GM12878 (cell line): ENCODE measurements at regions of chr21 and their contacts with region 1.

Region 1: DNA sequence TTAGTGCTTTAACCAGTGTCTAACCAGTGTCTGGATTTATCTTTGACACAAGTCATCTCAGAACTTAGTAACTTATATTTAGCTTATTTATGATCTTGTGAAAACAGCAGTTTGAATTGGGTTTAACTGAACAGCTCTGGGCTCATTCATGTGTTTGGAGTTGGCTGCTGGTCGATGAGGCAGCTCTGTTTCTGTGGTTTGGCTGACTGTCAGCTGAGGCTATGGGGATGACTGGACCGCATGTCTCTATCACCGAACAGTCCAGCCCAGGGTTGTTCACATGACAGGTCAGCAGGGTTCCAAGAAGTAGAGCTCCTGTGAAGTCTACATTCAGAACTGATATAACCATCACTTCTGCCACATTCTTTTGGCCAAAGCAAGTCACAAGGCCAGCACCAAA is 29.1 kb upstream of the C21orf91 start:
- DNase-seq: peak; percentile 84
- ATAC-seq: peak; percentile 98
- H3K4me3 ChIP-seq: no peak overlapping the region
- H3K27ac ChIP-seq: peak overlapping the region; percentile 29; the same call in 1 of the 2 replicates
- H3K4me1 ChIP-seq: peaks cover 17% of the 10 kb centered on the region; the same call in 1 of the 2 replicates
- H3K27me3 ChIP-seq: no peaks in the 10 kb centered on the region
- CTCF ChIP-seq: no peak
- EP300 ChIP-seq: peak; percentile 74 to 95; a peak in 2 of 4 replicates
- POLR2A ChIP-seq: no peak
- RAD21 ChIP-seq: peak; percentile 13; the same call in 1 of the 2 replicates

Region 2: DNA sequence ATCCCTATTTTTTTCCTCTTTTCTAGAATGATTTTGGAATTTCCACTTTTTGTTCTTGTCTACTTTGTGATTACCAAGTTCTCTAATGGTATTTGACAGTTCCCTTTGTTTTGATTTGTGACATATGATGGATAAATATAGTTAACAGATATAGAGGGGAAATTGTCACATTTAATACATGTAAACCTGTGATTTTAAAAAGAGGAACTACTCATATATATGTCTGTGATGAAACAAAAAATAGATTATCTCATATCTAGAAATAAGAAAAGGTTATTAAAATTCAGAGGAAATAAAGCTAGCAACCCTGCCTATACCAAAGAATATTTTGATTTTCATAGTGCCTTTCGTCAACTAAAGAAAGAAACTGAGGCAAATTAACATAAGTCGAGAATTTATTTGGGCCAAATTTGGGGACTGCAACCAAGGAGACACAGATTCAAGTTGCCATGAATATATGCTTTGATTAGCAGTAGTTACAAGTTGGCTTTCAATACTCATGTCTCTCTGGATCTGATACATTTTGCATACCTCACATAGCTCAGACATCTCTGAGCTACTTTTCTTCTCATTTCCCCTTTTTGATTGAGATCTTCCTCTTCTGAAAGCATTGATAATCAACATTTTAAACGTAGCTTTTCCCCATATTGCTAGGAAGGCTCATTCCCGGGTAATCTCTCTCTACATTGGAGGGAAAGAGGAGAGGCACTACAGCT is 13.4 kb before region 1 on chr21:
- CTCF ChIA-PET with region 1: interaction called, 4 read pairs
- POLR2A ChIA-PET with region 1: no interaction called
- RAD21 ChIA-PET with region 1: interaction called, 4 read pairs
- SMC1A ChIA-PET with region 1: interaction called, 13 read pairs
- in situ Hi-C with region 1: no loop called
- intact Hi-C with region 1: no loop called
- DNase-seq: no peak
- ATAC-seq: peak; percentile 71
- H3K4me3 ChIP-seq: no peak overlapping the region
- H3K27ac ChIP-seq: no peak overlapping the region
- H3K4me1 ChIP-seq: peaks cover 6% of the 10 kb centered on the region; the same call in 1 of the 2 replicates
- H3K27me3 ChIP-seq: no peaks in the 10 kb centered on the region
- CTCF ChIP-seq: no peak
- EP300 ChIP-seq: no peak
- POLR2A ChIP-seq: no peak
- RAD21 ChIP-seq: no peak